ENCODE measurements at regions of chr5 and their contacts with region 1.

Region 1: DNA sequence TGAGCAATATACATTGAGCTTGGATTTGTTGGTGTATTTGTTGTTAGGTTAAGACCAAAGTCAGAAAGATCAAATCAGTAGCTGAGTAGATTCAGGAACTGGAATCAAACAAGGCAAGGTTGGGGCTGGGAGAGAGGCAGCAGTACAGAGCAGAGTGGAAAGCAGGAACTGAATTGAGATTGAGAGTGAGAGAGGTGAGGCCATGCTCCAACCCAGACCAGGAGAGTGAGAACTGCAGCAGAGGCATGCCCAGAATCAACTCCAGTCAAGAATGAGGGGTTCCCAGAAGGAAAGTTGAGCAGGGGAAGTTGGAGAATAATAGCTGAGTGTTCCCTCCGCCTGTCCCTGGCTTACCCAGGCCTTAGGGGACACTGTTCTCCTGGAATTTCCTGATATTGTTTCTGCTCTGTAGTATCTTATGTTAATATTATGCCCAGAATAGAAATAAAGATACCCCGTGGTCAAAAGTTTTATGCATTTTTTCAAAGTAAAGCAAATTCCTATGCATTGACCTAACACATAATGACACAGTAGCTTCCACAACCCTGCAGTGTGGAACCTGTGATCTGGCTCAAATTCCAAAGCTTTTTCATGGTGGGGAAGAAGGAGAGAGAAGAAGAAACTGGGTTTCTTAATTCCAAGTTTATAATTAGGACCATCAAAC is 82.7 kb downstream of the SV2C start:
- DNase-seq: no peak
- ATAC-seq: no peak
- H3K4me3 ChIP-seq: no peak overlapping the region
- H3K27ac ChIP-seq: no peak overlapping the region
- H3K4me1 ChIP-seq: no peaks in the 10 kb centered on the region
- H3K27me3 ChIP-seq: no peaks in the 10 kb centered on the region; the same call in none of the 2 replicates
- CTCF ChIP-seq: no peak

Region 2: GRCh38 chr5:75756981-75757380 is 408.9 kb before region 1 on chr5:
- CTCF ChIA-PET with region 1: no interaction called
- POLR2A ChIA-PET with region 1: no interaction called
- in situ Hi-C with region 1: no loop called
- intact Hi-C with region 1: no loop called
- DNase-seq: no peak
- ATAC-seq: no peak
- H3K4me3 ChIP-seq: no peak overlapping the region
- H3K27ac ChIP-seq: no peak overlapping the region
- H3K4me1 ChIP-seq: no peaks in the 10 kb centered on the region
- H3K27me3 ChIP-seq: peaks cover 8% of the 10 kb centered on the region
- CTCF ChIP-seq: no peak

Region 3: GRCh38 chr5:76062502-76063041 is 103.3 kb before region 1 on chr5:
- CTCF ChIA-PET with region 1: no interaction called
- POLR2A ChIA-PET with region 1: no interaction called
- in situ Hi-C with region 1: no loop called
- intact Hi-C with region 1: no loop called
- DNase-seq: no peak
- ATAC-seq: no peak
- H3K4me3 ChIP-seq: no peak overlapping the region
- H3K27ac ChIP-seq: no peak overlapping the region
- H3K4me1 ChIP-seq: no peaks in the 10 kb centered on the region
- H3K27me3 ChIP-seq: peaks cover 10% of the 10 kb centered on the region
- CTCF ChIP-seq: no peak

Region 4: GRCh38 chr5:76425928-76426804 is 260.3 kb after region 1 on chr5:
- CTCF ChIA-PET with region 1: interaction called, 11 read pairs
- POLR2A ChIA-PET with region 1: no interaction called
- in situ Hi-C with region 1: no loop called
- intact Hi-C with region 1: no loop called
- DNase-seq: no peak
- ATAC-seq: no peak
- H3K4me3 ChIP-seq: no peak overlapping the region
- H3K27ac ChIP-seq: no peak overlapping the region
- H3K4me1 ChIP-seq: no peaks in the 10 kb centered on the region
- H3K27me3 ChIP-seq: no peaks in the 10 kb centered on the region
- CTCF ChIP-seq: no peak

Region 5: DNA sequence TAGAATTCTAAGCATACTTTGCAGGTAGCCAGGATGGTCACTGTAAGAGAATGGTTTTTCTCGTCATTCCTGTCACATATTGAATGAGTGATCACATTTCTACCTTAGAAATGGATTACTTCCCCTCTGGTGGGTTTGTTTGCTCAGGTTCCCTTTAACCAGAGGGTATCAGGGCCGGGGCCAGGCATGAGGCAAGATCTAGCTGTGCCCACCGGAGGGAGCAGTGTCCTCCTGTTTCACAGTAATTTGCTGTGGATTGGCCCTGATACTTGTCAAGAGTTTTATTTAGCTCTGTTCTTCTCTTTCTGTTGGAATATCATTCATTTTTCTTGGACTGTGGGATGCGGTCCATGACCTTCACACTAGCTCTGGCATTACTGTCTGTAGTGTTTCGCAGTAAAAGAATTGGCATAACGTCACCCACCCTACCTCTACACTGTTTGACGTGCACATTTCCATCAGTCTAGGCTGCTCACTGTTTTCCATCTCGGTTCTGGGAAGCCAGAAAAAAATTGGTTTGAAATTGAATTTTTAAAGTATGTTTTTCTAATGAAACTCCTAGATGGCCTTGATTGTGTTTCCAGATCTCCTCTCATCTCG is 963.6 kb after region 1 on chr5:
- CTCF ChIA-PET with region 1: no interaction called
- POLR2A ChIA-PET with region 1: no interaction called
- in situ Hi-C with region 1: no loop called
- intact Hi-C with region 1: no loop called
- DNase-seq: no peak
- ATAC-seq: no peak; the same call in 1 of the 2 replicates
- H3K4me3 ChIP-seq: no peak overlapping the region
- H3K27ac ChIP-seq: no peak overlapping the region
- H3K4me1 ChIP-seq: 0 out of 2 replicates have a peak, but pooled peaks cover 3% of the 10 kb centered on the region
- H3K27me3 ChIP-seq: no peaks in the 10 kb centered on the region
- CTCF ChIP-seq: peak; percentile 61